Activated CD4-positive, alpha-beta memory T cell treated with anti-CD3 and anti-CD28 coated beads for 36 hours (primary cell): ENCODE measurements at regions of chr3 and their contacts with region 1.

Region 1: GRCh38 chr3:180912304-180913296 is at the start of gene FXR1:
- DNase-seq: peak; percentile 96
- H3K4me3 Mint-ChIP-seq: peak within 1 kb of the TSS; percentile 94
- H3K27ac Mint-ChIP-seq: peak within 1 kb of the TSS; percentile 97
- H3K4me1 Mint-ChIP-seq: peaks cover 51% of the 10 kb centered on the region
- H3K27me3 Mint-ChIP-seq: no peaks in the 10 kb centered on the region
- total RNA-seq, gene FXR1: 165 to 169 TPM

Region 2: DNA sequence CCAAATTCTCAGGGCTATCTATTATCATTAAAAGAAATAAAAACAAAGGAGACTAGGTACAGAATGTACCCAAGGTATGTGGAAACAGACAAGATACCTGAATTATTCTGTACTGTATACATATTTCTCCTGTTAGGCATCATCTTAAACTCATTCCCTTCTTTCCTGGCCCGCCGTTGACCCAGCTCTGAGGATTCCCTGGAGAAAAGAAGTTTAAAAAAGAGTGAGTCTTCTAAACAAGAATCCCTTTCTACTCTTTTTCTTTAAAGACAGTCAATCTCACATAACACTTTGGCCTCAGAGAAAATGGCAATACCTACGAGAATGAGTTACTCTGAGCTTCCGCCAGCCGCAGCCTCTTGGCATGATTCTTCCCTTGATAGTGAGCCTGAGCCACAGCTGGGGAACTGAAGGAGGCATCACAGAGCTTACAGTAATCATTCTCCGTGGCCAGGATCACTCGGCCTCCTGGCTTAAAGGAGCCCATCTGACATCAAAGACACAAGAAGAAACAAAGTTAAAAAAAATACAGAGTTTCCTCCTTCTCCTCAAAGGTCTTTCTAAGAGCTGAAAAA is 1885.2 kb before region 1 on chr3:
- CTCF ChIA-PET with region 1: no interaction called
- POLR2A ChIA-PET with region 1: no interaction called
- intact Hi-C with region 1: loop called (anchors 10 kb)
- DNase-seq: peak; percentile 34
- H3K4me3 Mint-ChIP-seq: no peak overlapping the region
- H3K27ac Mint-ChIP-seq: peak overlapping the region; percentile 29
- H3K4me1 Mint-ChIP-seq: peaks cover 24% of the 10 kb centered on the region
- H3K27me3 Mint-ChIP-seq: no peaks in the 10 kb centered on the region

Region 3: GRCh38 chr3:180888992-180889560 is 23.5 kb before region 1 on chr3:
- CTCF ChIA-PET with region 1: no interaction called
- POLR2A ChIA-PET with region 1: no interaction called
- intact Hi-C with region 1: no loop called
- DNase-seq: no peak
- H3K4me3 Mint-ChIP-seq: no peak overlapping the region
- H3K27ac Mint-ChIP-seq: no peak overlapping the region
- H3K4me1 Mint-ChIP-seq: no peaks in the 10 kb centered on the region
- H3K27me3 Mint-ChIP-seq: peaks cover 2% of the 10 kb centered on the region

Region 4: DNA sequence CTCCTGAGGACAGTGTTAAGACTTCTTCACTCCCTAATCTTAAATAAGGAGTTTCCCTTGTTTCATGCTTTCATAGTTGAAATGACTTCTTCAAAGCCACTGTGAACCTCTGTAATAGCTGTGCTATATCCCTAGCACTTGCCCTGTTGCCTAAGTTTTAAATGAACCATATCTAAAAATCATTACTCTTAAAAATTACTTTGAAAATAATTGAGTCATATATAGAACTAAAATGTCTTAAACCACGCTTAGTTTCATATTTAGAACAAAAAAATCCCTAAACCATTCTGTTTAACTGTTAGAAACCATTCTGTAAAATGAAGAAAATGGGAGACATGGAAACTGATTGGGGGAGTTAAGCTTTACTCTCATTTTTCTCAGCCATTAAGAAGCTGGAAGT is 47.1 kb after region 1 on chr3:
- CTCF ChIA-PET with region 1: interaction called, 4 read pairs
- POLR2A ChIA-PET with region 1: no interaction called
- intact Hi-C with region 1: loop called (anchors 1 kb)
- DNase-seq: no peak
- H3K4me3 Mint-ChIP-seq: no peak overlapping the region
- H3K27ac Mint-ChIP-seq: peak overlapping the region; percentile 64
- H3K4me1 Mint-ChIP-seq: peaks cover 15% of the 10 kb centered on the region
- H3K27me3 Mint-ChIP-seq: no peaks in the 10 kb centered on the region

Region 5: DNA sequence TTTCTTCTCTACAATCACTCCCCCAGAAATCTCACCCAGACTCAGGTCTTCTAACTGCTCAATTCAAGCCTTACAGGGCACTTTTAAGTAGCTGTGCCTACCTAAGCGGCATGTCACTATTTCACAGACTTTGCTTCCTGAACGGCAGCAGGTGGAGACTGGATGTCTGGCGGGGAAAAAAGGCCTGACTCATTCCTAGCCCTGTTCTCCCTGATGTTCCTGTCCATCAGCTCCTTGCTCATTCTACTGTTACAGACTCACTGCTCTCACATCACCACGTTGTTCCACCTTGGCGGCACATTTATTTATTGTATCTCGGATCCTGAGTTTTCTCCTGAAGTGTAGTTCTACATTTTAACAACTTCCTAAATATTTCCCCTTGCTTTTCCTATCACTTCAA is 1828.1 kb after region 1 on chr3:
- CTCF ChIA-PET with region 1: no interaction called
- POLR2A ChIA-PET with region 1: no interaction called
- intact Hi-C with region 1: no loop called
- DNase-seq: no peak
- H3K4me3 Mint-ChIP-seq: no peak overlapping the region
- H3K27ac Mint-ChIP-seq: no peak overlapping the region
- H3K4me1 Mint-ChIP-seq: no peaks in the 10 kb centered on the region
- H3K27me3 Mint-ChIP-seq: peaks cover 5% of the 10 kb centered on the region